Posterior cingulate gyrus (tissue), 11 donors: ENCODE measurements at regions of chr17 and their contacts with region 1.

Region 1: GRCh38 chr17:31373150-31374093 is 18.1 kb upstream of the RAB11FIP4 start:
- DNase-seq: no peak

Region 2: DNA sequence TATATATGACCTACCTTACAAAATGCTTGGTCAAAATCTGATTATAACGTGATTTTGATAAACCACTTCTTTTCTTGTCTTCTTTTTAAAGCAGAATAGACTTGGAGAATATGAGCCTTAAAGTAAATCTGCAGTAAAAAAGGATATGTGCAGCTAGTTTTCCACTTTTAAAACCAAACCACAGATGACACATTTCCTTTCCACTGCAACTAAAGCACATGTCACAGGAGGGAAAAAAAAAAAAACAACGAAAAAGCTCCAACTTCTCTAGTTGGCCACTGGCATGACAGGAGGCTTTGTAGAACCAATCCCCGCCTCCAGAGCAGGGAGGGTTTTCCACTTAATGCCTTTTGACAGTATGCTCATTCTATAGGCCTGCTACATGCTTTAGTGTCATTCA is 51.9 kb before region 1 on chr17 and contains the start of gene EVI2A:
- intact Hi-C with region 1: loop called (anchors 5 kb)
- DNase-seq: peak in 6 of 10 donors; percentile 14 to 88 (median 38)

Region 3: GRCh38 chr17:31416503-31416923 is 43.1 kb after region 1 on chr17:
- intact Hi-C with region 1: no loop called
- DNase-seq: peak; percentile 75 to 98 (median 86)